Colonic mucosa (tissue), 4 donors: ENCODE measurements at regions of chr6 and their contacts with region 1.

Region 1: DNA sequence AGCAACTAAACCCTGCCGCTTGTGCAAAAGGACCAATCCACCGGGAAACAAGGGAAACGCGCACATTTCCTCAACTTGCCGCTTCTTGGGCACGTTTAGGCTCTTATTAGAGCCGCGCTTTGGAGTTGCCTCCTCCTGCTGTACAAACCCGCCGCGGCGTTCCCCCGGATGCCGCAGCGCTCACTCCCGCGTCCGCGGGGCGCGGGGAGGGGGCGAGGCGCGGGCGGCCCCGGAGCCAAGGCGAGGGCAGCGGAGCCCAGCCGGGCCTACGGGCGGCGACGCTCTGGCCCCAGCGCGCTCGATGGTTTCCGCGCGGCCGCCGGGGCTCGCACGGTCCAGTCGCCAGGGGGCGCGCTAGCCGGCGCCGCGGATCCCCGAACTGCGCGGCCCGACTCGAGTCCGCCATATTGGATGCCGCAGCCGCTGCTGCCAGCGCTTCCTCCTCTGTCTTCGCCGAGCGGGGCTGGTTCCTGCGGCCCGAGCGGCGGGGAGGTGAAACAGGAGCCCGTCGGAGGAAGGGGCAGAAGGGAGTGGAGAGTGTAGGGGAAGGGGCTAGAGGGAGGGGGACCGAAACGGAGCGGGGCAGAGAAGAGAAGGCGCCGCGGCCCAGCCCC is at the start of gene SCAF8:
- DNase-seq: peak; percentile 83
- H3K4me3 ChIP-seq: peak within 1 kb of the TSS; percentile 92
- H3K27ac ChIP-seq: peak within 1 kb of the TSS; percentile 100
- H3K4me1 ChIP-seq: peaks cover 10% of the 10 kb centered on the region
- H3K27me3 ChIP-seq: no peaks in the 10 kb centered on the region
- CTCF ChIP-seq: peak; percentile 70
- total RNA-seq, gene SCAF8: 30.8 to 35.6 TPM

Region 2: DNA sequence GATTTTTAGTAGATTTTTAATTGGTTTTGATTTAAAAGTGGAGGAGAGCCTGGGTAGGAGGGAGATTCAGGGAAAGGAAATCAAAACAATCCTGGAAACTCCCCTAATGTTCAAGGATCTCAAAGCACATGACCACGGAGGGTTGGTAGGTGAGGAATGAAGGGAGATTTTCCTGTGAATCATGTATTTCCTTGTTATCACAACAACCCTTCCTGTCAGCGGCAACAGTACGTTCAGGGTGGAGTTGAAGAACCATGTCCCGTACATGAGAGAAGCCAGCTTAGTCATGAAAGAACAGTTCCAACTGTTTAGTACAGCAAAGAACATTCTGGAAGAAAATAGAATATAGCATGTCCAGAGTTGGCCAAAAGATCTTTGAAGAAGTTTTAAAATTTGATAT is 79.3 kb before region 1 on chr6:
- intact Hi-C with region 1: no loop called
- DNase-seq: no peak
- H3K4me3 ChIP-seq: no peak overlapping the region
- H3K27ac ChIP-seq: no peak overlapping the region
- H3K4me1 ChIP-seq: no peaks in the 10 kb centered on the region
- H3K27me3 ChIP-seq: no peaks in the 10 kb centered on the region
- CTCF ChIP-seq: no peak

Region 3: DNA sequence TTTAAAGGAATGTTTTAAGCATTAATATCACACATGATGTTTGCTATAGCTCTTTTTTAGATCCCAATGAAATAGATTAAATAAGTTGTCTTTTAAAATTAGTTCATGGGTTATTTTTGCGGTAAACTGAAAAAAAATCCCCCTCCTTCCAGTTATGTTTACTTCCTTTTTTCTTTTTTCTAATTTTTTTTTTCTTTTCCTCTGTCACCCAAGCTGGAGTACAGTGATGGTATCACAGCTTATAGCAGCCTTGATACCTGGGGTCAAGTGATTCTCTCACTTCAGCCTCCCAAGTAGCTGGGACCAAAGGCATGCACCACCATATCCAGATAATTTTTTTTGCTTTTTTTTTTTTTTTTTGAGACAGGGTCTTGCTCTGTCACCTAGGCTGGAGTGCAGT is 17.7 kb before region 1 on chr6:
- intact Hi-C with region 1: no loop called
- DNase-seq: no peak
- H3K4me3 ChIP-seq: no peak overlapping the region
- H3K27ac ChIP-seq: no peak overlapping the region
- H3K4me1 ChIP-seq: no peaks in the 10 kb centered on the region
- H3K27me3 ChIP-seq: no peaks in the 10 kb centered on the region
- CTCF ChIP-seq: no peak

Region 4: DNA sequence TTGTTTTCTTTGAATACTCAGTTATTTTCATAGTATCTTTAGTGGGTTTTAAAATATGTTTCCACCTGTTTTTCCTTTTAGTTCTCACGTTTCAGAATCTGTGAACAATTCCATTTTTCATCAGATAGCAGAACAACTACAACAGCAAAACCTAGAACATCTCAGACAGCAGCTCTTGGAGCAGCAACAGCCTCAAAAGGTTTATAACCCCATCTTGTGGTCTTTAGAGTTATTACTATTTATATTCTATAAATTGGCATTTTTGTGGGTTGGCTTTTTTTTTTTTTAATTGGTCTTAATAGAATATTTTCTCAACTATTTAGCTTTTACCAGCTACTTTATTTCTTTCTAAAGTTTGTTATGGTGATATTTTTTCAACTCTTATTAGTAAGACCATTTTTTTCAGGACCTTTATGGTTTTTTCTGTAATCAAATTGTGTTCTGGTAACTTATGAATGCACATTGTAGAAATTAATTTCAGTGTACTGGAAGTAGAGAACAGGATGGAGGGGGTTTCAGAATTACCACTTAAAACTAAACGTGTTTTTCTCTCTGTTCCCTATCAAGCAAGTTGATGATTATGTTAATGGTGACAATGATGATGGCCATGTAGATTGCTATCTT is 72.3 kb after region 1 on chr6:
- intact Hi-C with region 1: loop called (anchors 10 kb)
- DNase-seq: no peak
- H3K4me3 ChIP-seq: no peak overlapping the region
- H3K27ac ChIP-seq: no peak overlapping the region
- H3K4me1 ChIP-seq: no peaks in the 10 kb centered on the region
- H3K27me3 ChIP-seq: no peaks in the 10 kb centered on the region
- CTCF ChIP-seq: no peak

Region 5: GRCh38 chr6:154868143-154868594 is 135.1 kb after region 1 on chr6:
- intact Hi-C with region 1: no loop called
- DNase-seq: no peak
- H3K4me3 ChIP-seq: no peak overlapping the region
- H3K27ac ChIP-seq: no peak overlapping the region
- H3K4me1 ChIP-seq: no peaks in the 10 kb centered on the region
- H3K27me3 ChIP-seq: no peaks in the 10 kb centered on the region
- CTCF ChIP-seq: peak; percentile 65

Region 6: GRCh38 chr6:155837474-155837873 is 1104.4 kb after region 1 on chr6:
- intact Hi-C with region 1: no loop called
- DNase-seq: no peak
- H3K4me3 ChIP-seq: no peak overlapping the region
- H3K27ac ChIP-seq: no peak overlapping the region
- H3K4me1 ChIP-seq: no peaks in the 10 kb centered on the region
- H3K27me3 ChIP-seq: no peaks in the 10 kb centered on the region
- CTCF ChIP-seq: no peak